ENCODE measurements at regions of chr4 and their contacts with region 1.

Region 1: DNA sequence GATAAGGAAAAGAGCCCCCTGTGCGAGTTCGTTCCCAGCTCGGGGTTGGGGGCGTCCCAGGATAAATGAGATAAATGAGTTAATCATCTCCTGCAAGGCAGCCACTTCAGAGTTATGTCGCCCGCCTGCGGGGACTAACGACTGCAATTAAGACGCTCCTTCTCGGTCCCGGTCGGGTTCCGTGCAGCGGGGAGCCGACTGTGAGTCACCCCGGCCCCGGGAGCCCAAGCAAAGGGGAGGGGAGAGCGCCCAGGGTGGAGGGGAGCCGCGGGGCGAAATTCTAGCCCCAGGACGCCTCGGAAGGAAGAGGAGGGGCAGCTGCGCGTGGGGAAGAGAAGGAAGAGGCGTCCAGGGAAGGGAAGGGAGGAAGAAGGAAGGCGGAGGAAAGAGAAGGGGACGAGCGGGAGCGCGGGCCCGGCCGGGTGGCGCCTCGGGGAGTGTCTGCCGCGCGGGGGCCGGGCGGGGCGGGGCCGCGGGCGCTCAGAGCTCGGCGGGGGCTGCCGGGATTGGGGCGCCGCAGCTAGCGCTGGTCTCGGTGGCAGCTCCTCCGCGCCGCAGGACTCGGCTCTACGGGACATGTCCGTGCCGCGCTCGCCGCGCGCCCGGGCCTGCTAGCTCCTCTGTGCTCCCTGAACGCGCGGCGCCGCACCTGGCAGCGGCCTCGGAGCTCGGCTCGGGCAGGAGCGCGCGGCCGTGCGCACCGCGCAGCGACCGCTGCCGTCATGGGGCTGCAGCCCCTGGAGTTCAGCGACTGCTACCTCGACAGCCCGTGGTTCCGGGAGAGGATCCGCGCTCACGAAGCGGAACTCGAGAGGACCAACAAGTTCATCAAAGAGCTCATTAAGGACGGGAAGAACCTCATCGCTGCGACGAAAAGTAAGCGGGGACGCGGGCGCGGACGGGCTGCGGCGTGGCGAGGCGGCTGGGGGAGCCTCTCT is at the start of gene ARHGAP10:
- DNase-seq: peak; percentile 57 to 79 (median 65)
- H3K4me3 ChIP-seq: peak within 1 kb of the TSS; percentile 76 to 84
- H3K4me3 Mint-ChIP-seq: peak within 1 kb of the TSS; percentile 90 to 97 (median 93)
- H3K27ac ChIP-seq: peak within 1 kb of the TSS; percentile 57
- H3K27ac Mint-ChIP-seq: peak within 1 kb of the TSS; percentile 91 to 97 (median 94)
- H3K4me1 ChIP-seq: peaks cover 26% of the 10 kb centered on the region
- H3K4me1 Mint-ChIP-seq: peaks cover 30 to 47% (median 42%) of the 10 kb centered on the region in 4 donors
- H3K27me3 ChIP-seq: no peaks in the 10 kb centered on the region
- H3K27me3 Mint-ChIP-seq: no peaks in the 10 kb centered on the region
- total RNA-seq, gene ARHGAP10: 8.2 to 8.3 TPM

Region 2: DNA sequence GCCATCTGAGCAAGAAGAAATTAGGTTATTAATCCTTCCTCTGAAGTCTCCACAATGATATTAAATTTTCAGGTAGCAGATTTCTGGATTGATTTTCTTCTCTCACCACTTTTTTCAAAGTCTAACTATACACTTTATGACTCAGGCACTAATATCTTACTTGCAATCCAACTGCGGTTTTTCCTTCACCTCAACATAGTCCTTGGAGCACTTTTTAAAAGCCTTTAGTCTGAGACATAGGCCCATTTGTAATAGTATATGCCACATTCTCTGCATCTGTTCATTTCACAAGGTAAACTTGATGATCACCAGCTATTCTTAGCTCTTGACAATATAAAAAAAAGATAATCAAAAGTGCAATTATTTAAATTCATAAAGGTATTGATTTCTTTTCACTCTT is 306.8 kb before region 1 on chr4:
- CTCF ChIA-PET with region 1: no interaction called
- POLR2A ChIA-PET with region 1: no interaction called
- intact Hi-C with region 1: no loop called
- DNase-seq: no peak
- H3K4me3 ChIP-seq: no peak overlapping the region
- H3K4me3 Mint-ChIP-seq: no peak overlapping the region
- H3K27ac ChIP-seq: no peak overlapping the region
- H3K27ac Mint-ChIP-seq: no peak overlapping the region
- H3K4me1 ChIP-seq: no peaks in the 10 kb centered on the region
- H3K4me1 Mint-ChIP-seq: no peaks in the 10 kb centered on the region
- H3K27me3 ChIP-seq: no peaks in the 10 kb centered on the region
- H3K27me3 Mint-ChIP-seq: no peaks in the 10 kb centered on the region

Region 3: DNA sequence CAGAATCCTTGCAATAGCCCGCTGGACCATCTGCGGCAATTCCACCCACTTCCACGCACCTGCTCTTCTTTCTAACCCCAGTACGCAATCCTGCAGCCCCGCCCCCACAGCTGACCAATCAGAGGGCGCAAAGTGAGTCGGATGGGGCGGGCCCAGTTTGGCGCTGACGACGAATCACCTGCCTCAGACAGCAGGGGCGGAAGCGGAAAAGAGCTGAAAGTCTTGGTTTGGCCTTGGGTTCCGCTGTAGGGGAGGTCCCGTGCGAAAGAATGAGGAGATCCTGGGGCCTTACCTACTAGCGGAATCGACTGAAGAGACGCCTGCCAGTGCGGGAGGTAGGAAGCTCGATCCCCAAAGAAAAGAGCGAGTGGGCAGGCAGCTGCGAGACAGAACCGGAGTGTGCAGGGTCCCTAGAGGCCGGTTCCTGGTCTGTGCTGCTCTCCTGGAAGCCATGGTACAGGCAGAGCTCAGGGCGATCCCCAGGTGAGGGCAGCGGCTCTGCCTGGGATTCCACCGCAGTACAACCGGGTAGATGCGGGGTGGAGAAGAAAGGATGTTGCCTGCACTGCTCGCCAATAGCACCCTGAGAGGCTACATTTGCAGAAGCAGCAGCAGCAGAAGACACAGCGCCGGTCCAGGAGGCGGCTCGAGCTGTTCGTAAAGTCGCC is 114.5 kb before region 1 on chr4 and contains the start of gene TMEM184C:
- CTCF ChIA-PET with region 1: interaction called, 10 read pairs
- POLR2A ChIA-PET with region 1: interaction called, 29 read pairs
- intact Hi-C with region 1: loop called (anchors 1 kb)
- DNase-seq: peak; percentile 97 to 98 (median 98)
- H3K4me3 ChIP-seq: peak within 1 kb of the TSS; percentile 82 to 99
- H3K4me3 Mint-ChIP-seq: peak within 1 kb of the TSS; percentile 92 to 98 (median 96)
- H3K27ac ChIP-seq: peak within 1 kb of the TSS; percentile 93
- H3K27ac Mint-ChIP-seq: peak within 1 kb of the TSS; percentile 96 to 99 (median 97)
- H3K4me1 ChIP-seq: peaks cover 49% of the 10 kb centered on the region
- H3K4me1 Mint-ChIP-seq: peaks cover 22 to 51% (median 36%) of the 10 kb centered on the region in 4 donors
- H3K27me3 ChIP-seq: no peaks in the 10 kb centered on the region
- H3K27me3 Mint-ChIP-seq: peaks cover 0 to 1% of the 10 kb centered on the region in 2 donors
- total RNA-seq, gene TMEM184C: 28.8 to 31.5 TPM

Region 4: GRCh38 chr4:147756417-147756816 is 24.6 kb after region 1 on chr4:
- CTCF ChIA-PET with region 1: no interaction called
- POLR2A ChIA-PET with region 1: no interaction called
- intact Hi-C with region 1: no loop called
- DNase-seq: no peak
- H3K4me3 ChIP-seq: no peak overlapping the region
- H3K4me3 Mint-ChIP-seq: no peak overlapping the region
- H3K27ac ChIP-seq: no peak overlapping the region
- H3K27ac Mint-ChIP-seq: peak overlapping the region in 1 of 7 donors; percentile 48
- H3K4me1 ChIP-seq: no peaks in the 10 kb centered on the region
- H3K4me1 Mint-ChIP-seq: peaks cover 3 to 15% (median 7%) of the 10 kb centered on the region in 4 donors
- H3K27me3 ChIP-seq: no peaks in the 10 kb centered on the region
- H3K27me3 Mint-ChIP-seq: no peaks in the 10 kb centered on the region

Region 5: DNA sequence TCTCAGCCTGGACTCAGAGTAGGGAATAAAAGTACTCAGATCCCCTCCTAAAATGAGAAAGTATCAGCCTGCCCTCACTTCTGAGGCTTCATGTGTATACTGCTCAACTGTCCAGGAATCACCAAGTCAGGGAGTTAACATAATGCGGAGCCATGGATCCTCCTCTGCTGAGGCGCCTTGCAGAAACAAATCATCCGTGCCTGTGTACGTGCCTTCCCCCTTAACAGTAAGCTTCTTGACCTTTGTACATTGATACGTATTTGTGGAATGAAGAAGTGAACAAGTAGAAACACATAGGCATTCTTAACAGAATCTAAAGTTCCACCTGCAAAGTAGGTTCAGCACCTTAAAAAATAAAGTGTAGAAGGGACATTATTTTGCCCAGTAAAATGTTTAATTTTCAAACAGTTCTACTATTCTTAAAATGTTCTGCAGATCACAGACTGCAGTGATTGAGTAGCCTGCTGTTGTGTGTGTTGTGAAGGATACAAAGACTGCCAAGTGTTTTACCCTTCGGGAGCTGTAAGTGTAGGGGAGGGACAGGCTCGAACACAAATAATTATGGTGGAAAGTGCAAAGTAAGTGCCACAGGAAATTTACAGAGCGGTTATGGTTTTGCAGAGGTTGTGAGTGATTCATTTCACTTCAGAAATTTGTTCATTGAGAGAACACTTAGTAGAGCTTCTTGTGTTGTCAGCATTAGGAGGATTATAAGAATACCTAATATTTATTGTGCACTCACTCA is 61.9 kb after region 1 on chr4:
- CTCF ChIA-PET with region 1: interaction called, 14 read pairs
- POLR2A ChIA-PET with region 1: interaction called, 30 read pairs
- intact Hi-C with region 1: loop called (anchors 5 kb)
- DNase-seq: no peak
- H3K4me3 ChIP-seq: no peak overlapping the region
- H3K4me3 Mint-ChIP-seq: peak overlapping the region; percentile 32 to 89 (median 68)
- H3K27ac ChIP-seq: no peak overlapping the region
- H3K27ac Mint-ChIP-seq: peak overlapping the region; percentile 29 to 87 (median 75)
- H3K4me1 ChIP-seq: peaks cover 27% of the 10 kb centered on the region
- H3K4me1 Mint-ChIP-seq: peaks cover 31 to 42% (median 36%) of the 10 kb centered on the region in 4 donors
- H3K27me3 ChIP-seq: no peaks in the 10 kb centered on the region
- H3K27me3 Mint-ChIP-seq: no peaks in the 10 kb centered on the region

Measured in CD4-positive, alpha-beta memory T cell (primary cell).